ENCODE measurements at regions of chr1 and their contacts with region 1.

Region 1: GRCh38 chr1:155504207-155504606 is 58.4 kb downstream of the ASH1L start:
- DNase-seq: peak; percentile 32
- ATAC-seq: peak; percentile 62
- H3K4me3 ChIP-seq: no peak overlapping the region
- H3K27ac ChIP-seq: no peak overlapping the region
- H3K4me1 ChIP-seq: peaks cover 22% of the 10 kb centered on the region
- H3K27me3 ChIP-seq: no peaks in the 10 kb centered on the region
- CTCF ChIP-seq: peak; percentile 31
- EP300 ChIP-seq: no peak
- POLR2A ChIP-seq: no peak
- RAD21 ChIP-seq: no peak

Region 2: DNA sequence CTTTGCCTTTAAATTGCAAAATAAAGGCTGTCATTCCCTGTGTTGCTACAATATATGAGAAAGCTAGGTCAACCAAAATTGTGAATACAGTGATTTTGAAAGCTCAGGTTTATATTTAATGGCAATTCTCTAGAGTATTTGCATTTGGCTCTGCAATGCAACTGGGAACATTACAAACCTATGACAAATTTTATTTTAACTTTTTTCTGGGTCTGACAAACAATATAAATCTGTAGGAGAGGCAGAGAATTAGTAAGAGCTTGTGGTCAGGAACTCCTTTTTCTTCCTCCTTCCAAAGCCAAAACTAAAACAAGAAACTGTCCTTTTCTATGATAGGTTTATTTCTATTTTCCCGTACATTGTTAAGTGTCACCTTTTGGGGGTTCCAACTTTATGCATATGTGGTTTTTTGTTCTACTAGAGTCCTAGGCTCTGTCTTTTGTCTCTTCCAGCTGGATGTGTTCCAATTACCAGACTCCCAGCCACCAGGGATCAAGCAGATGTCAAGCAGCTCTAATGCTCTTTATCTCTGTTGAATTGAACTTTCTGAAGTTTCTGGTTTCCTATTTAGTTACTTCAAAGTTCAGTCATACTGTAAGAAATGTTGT is 48.5 kb before region 1 on chr1:
- CTCF ChIA-PET with region 1: no interaction called
- POLR2A ChIA-PET with region 1: no interaction called
- in situ Hi-C with region 1: no loop called
- intact Hi-C with region 1: loop called (anchors 10 kb)
- DNase-seq: no peak
- ATAC-seq: no peak
- H3K4me3 ChIP-seq: no peak overlapping the region
- H3K27ac ChIP-seq: no peak overlapping the region
- H3K4me1 ChIP-seq: peaks cover 28% of the 10 kb centered on the region
- H3K27me3 ChIP-seq: no peaks in the 10 kb centered on the region
- CTCF ChIP-seq: no peak
- EP300 ChIP-seq: no peak
- POLR2A ChIP-seq: no peak
- RAD21 ChIP-seq: no peak

Measured in HepG2 (cell line).